ENCODE measurements at regions of chr7 and their contacts with region 1.

Region 1: GRCh38 chr7:130277763-130278643 is 11.3 kb downstream of the CPA2 start:
- DNase-seq: no peak
- H3K4me3 ChIP-seq: no peak overlapping the region
- H3K27ac ChIP-seq: no peak overlapping the region
- H3K4me1 ChIP-seq: peaks cover 76% of the 10 kb centered on the region
- H3K27me3 ChIP-seq: no peaks in the 10 kb centered on the region
- CTCF ChIP-seq: peak in 1 of 2 donors; percentile 17

Region 2: DNA sequence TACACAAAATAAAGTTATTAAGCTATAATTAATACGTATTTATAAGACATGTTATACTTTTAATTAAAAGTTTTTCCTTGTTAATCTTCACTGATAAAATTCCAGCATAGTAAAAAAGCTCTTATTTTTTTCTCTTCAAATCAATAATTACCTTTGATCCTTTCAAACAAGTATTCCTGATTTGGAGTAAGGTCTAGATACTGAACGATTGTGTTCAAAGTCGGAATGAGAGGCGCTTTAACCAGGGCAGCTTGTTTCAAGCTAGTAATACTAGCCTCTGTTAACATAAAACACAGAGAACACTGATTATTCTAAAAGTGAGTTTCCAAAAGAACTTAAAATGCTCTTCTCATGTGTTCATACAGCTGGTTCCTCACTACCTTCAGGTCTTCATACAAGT is 99.8 kb before region 1 on chr7:
- CTCF ChIA-PET with region 1: no interaction called
- dilution Hi-C with region 1: no loop called
- in situ Hi-C with region 1: no loop called
- intact Hi-C with region 1: no loop called
- DNase-seq: no peak
- H3K4me3 ChIP-seq: no peak overlapping the region
- H3K27ac ChIP-seq: no peak overlapping the region
- H3K4me1 ChIP-seq: no peaks in the 10 kb centered on the region
- H3K27me3 ChIP-seq: no peaks in the 10 kb centered on the region
- CTCF ChIP-seq: no peak

Region 3: DNA sequence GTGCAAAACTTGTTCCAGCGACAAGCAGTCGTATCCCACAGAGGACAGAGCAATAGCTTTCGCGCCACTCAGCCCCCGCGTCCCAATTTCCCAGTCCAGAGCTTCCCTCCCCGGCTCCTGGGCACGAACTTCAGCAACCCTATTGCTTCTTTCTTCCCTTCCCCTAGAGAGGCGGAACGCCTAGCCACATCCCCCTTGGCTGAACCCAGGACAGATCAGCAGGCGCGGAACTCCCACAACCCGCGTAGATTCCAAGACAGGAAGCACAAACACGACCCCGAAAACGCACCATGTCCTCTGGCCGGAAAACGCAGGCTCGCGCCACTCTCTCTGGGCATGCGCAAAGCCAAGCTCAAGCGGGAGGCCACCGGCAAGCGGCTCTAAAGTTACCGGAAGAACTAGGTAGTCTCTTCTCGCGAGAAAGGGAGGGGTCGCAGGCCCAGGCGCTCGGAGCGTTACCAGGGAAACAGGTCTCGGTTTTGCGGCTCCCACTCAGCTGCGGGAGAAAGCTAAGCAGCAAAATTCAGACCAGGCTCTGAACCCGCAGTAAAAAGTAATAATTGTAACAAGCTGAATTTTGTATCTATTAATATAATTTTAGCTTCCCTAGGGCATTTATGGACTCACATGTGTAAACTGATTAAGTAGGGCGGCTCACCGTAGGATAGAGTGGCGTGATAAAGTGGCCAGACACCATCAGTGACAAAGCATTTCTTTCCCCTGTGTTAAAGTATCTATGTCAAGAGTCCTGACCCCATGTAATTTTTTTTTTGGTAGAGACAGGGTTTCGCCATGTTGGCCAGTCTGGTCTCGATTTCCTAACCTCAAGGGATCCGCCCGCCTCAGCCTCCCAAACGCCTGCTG is 72.7 kb before region 1 on chr7 and contains the start of gene TMEM209:
- CTCF ChIA-PET with region 1: no interaction called
- dilution Hi-C with region 1: no loop called
- in situ Hi-C with region 1: no loop called
- intact Hi-C with region 1: loop called (anchors 5 kb)
- DNase-seq: peak; percentile 93
- H3K4me3 ChIP-seq: peak within 1 kb of the TSS; percentile 91 to 94 (median 91)
- H3K27ac ChIP-seq: peak within 1 kb of the TSS; percentile 89
- H3K4me1 ChIP-seq: peaks cover 8% of the 10 kb centered on the region
- H3K27me3 ChIP-seq: no peaks in the 10 kb centered on the region
- CTCF ChIP-seq: no peak
- total RNA-seq, gene TMEM209: 23.6 to 24.3 TPM

Region 4: DNA sequence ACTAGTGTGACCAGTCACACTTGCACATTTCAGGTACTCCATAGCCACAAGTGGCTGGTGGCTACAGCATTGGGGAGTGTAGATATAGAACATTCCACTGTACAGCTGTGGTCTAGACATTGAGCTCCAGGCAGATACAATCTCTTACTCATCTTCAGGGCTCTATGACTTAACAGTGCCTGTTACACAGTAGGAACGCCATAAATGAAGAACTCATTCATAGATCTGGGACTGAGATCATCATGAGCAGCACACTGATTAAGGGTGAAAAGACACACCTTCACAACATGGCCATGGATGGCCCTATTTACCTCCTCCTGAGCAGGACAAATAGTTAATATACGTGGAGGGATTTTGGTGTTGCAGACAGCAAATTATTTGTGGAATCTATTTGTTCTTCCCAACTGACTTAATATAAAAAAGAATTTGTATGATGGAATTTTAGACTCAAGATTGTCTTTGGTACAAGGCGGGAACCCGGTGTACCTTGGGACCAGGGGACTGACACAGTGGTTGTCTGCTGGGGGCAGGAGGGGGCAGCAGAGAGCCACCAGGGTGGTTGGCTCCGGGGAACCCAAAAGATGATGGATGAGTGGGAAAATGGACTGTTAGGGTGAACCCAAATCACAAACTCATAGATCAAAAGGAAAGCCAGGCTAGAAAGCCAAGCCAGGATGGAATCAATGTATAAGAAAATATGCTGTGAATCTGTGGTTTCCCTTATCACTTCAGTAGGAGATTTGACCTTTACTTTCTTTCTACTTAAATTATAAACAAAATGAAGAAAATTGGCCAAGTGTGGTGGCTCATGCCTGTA is 35.6 kb before region 1 on chr7:
- CTCF ChIA-PET with region 1: no interaction called
- dilution Hi-C with region 1: no loop called
- in situ Hi-C with region 1: no loop called
- intact Hi-C with region 1: loop called (anchors 2 kb)
- DNase-seq: peak; percentile 93
- H3K4me3 ChIP-seq: no peak overlapping the region
- H3K27ac ChIP-seq: peak overlapping the region; percentile 76
- H3K4me1 ChIP-seq: peaks cover 13% of the 10 kb centered on the region
- H3K27me3 ChIP-seq: no peaks in the 10 kb centered on the region
- CTCF ChIP-seq: peak; percentile 78 to 89

Region 5: GRCh38 chr7:130356121-130356875 is 78.3 kb after region 1 on chr7:
- CTCF ChIA-PET with region 1: interaction called, 4 read pairs
- dilution Hi-C with region 1: loop called (anchors 5 kb)
- in situ Hi-C with region 1: no loop called
- intact Hi-C with region 1: no loop called
- DNase-seq: peak; percentile 95
- H3K4me3 ChIP-seq: no peak overlapping the region
- H3K27ac ChIP-seq: peak overlapping the region; percentile 86
- H3K4me1 ChIP-seq: peaks cover 54% of the 10 kb centered on the region
- H3K27me3 ChIP-seq: no peaks in the 10 kb centered on the region
- CTCF ChIP-seq: no peak

Region 6: DNA sequence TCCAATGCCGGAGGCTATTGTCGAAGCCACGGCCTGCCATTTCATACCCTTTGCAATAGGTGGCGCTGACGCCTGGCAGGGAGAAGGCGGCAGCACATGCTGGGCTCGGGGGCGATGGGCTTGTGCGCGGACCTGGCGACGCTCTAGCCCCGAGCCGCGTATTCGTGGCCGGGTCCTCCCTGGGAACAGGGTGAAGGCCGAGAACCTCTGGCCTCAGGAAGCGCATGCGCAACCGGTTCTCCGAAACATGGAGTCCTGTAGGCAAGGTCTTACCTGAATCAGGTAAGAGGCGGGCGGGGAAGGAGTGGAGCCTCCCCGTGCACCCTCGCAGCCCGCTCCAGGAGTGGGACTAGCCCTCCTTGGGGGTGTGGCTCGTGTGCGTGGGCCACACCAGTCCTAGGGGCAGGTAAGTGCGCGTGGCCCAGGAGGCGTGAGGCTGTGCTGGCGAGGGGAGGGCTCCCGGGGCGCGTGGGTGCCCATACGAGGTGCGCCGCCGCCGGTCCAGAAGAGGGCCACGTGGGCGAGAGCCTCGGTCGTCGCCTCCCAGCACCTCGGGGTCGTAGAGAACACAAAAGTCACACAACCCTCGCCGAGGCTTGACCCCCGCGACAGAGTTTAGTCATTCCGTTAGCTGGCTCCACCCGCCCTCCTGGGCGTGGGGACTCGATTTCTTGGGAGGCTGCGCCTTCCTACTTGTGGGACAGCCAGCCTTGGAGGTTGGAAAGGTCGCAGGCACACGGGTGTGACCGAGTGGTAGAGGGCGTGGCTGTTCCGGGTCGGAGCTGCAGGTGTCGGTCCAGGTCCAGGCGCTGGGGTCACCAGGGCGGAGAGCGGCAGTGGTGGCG is 208.3 kb after region 1 on chr7:
- CTCF ChIA-PET with region 1: no interaction called
- dilution Hi-C with region 1: no loop called
- in situ Hi-C with region 1: no loop called
- intact Hi-C with region 1: loop called (anchors 10 kb)
- DNase-seq: no peak
- H3K4me3 ChIP-seq: peak overlapping the region; percentile 15 to 50 (median 45)
- H3K27ac ChIP-seq: no peak overlapping the region
- H3K4me1 ChIP-seq: peaks cover 15% of the 10 kb centered on the region
- H3K27me3 ChIP-seq: no peaks in the 10 kb centered on the region
- CTCF ChIP-seq: peak; percentile 42 to 59